ENCODE measurements at regions of chr11 and their contacts with region 1.

Region 1: GRCh38 chr11:4187055-4187988 is 92.7 kb downstream of the RRM1 start:
- DNase-seq: peak; percentile 80 to 84
- ATAC-seq: peak; percentile 87 to 94
- H3K4me3 ChIP-seq: peak overlapping the region; percentile 77
- H3K27ac ChIP-seq: peak overlapping the region; percentile 91 to 94
- H3K4me1 ChIP-seq: no peaks in the 10 kb centered on the region
- CTCF ChIP-seq: peak; percentile 94
- EP300 ChIP-seq: no peak
- POLR2A ChIP-seq: no peak
- RAD21 ChIP-seq: peak; percentile 92 to 99

Region 2: DNA sequence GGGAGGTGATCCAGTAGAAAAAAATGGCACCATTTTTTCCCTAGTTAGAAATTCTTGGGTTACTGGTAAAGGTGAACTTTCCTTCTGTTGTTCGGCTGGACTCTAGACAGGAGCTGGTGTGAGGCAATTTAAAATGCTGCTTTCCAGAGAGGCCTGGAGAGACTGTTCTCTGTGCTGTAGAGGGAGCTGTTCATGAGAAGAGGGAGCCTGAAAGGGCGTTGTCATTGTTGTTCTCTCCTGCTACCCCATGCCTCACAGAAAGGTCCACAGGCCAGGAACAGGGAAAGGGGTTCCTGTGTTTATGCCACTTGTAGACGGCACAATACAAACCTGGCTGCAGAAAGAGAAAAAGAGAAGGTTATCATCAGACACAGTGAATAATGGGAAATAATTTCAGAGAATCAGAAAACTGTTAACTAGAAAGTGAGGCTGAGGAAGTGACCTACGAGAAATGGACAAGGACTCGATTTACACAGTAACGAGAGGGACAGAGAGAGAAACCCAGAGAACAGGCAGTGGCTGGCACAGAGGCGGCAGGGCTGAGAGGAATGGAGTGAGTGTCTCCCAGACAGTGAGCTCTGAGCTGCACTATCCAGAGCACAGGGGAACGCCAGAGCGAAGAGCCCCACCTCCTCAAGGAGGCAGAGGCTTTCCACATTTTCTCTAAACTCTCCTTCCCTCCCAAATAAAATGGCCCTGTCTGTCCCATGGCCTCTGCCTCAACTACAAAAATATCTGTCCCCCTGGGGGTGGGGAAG is 16.5 kb after region 1 on chr11:
- CTCF ChIA-PET with region 1: interaction called, 31 read pairs
- POLR2A ChIA-PET with region 1: no interaction called
- DNase-seq: peak in 1 of 2 experiments; percentile 9
- ATAC-seq: peak in 1 of 2 experiments; percentile 74; a peak in 3 of 6 replicates
- H3K4me3 ChIP-seq: no peak overlapping the region
- H3K27ac ChIP-seq: no peak overlapping the region
- H3K4me1 ChIP-seq: no peaks in the 10 kb centered on the region
- CTCF ChIP-seq: no peak
- EP300 ChIP-seq: no peak
- POLR2A ChIP-seq: no peak
- RAD21 ChIP-seq: no peak

Region 3: GRCh38 chr11:4418403-4418802 is 231.1 kb after region 1 on chr11:
- CTCF ChIA-PET with region 1: interaction called, 11 read pairs
- POLR2A ChIA-PET with region 1: no interaction called
- DNase-seq: no peak
- ATAC-seq: no peak
- H3K4me3 ChIP-seq: no peak overlapping the region
- H3K27ac ChIP-seq: no peak overlapping the region
- H3K4me1 ChIP-seq: no peaks in the 10 kb centered on the region
- CTCF ChIP-seq: no peak
- EP300 ChIP-seq: no peak
- POLR2A ChIP-seq: no peak
- RAD21 ChIP-seq: no peak

Region 4: DNA sequence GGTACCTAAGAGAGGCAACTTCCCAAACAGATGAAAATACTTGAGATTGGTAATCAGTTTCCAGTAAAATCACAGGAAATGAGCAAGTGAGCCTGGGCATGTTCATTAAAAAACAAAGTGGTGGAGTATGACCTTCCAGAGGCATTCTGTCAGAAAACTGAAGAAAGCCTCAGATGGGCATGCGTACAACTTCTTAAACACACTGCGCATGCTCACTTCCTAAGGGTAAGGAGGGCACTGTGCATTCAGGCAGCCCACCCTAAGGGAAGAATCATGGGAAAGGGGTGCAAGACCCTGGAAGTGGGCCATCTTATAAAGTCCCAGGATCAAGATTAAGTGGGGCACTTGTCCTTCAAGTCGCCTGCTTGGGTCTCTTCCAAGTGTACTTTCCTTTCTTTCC is 265.8 kb after region 1 on chr11:
- CTCF ChIA-PET with region 1: no interaction called
- POLR2A ChIA-PET with region 1: no interaction called
- DNase-seq: no peak
- ATAC-seq: no peak
- H3K4me3 ChIP-seq: no peak overlapping the region
- H3K27ac ChIP-seq: no peak overlapping the region
- H3K4me1 ChIP-seq: no peaks in the 10 kb centered on the region
- CTCF ChIP-seq: no peak
- EP300 ChIP-seq: no peak
- POLR2A ChIP-seq: no peak
- RAD21 ChIP-seq: no peak

Region 5: GRCh38 chr11:4496557-4497275 is 309.4 kb after region 1 on chr11:
- CTCF ChIA-PET with region 1: interaction called, 96 read pairs
- POLR2A ChIA-PET with region 1: no interaction called
- DNase-seq: no peak
- ATAC-seq: no peak
- H3K4me3 ChIP-seq: no peak overlapping the region
- H3K27ac ChIP-seq: no peak overlapping the region
- H3K4me1 ChIP-seq: no peaks in the 10 kb centered on the region
- CTCF ChIP-seq: no peak
- EP300 ChIP-seq: no peak
- POLR2A ChIP-seq: no peak
- RAD21 ChIP-seq: no peak

Region 6: DNA sequence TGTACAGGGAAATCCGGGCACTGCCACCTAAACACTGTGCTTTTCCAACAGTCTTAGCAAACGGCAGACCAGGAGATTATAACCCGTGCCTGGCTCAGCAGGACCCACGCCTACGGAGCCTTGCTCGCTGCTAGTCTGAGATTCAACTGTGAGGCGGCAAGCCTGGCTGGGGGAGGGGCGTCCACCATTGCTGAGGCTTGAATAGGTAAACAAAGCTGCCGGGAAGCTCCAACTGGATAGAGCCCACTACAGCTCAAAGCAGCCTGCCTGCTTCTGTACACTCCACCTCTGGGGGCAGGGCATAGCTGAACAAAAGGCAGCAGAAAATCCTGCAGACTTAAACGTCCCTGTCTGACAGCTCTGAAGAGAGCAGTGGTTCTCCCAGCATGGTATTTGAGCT is 344.4 kb after region 1 on chr11:
- CTCF ChIA-PET with region 1: interaction called, 17 read pairs
- POLR2A ChIA-PET with region 1: no interaction called
- DNase-seq: no peak
- ATAC-seq: no peak
- H3K4me3 ChIP-seq: no peak overlapping the region
- H3K27ac ChIP-seq: no peak overlapping the region
- H3K4me1 ChIP-seq: no peaks in the 10 kb centered on the region
- CTCF ChIP-seq: no peak
- EP300 ChIP-seq: no peak
- POLR2A ChIP-seq: no peak
- RAD21 ChIP-seq: no peak

Region 7: GRCh38 chr11:4605057-4605456 is 417.7 kb after region 1 on chr11:
- CTCF ChIA-PET with region 1: interaction called, 11 read pairs
- POLR2A ChIA-PET with region 1: no interaction called
- DNase-seq: no peak
- ATAC-seq: no peak
- H3K4me3 ChIP-seq: no peak overlapping the region
- H3K27ac ChIP-seq: no peak overlapping the region
- H3K4me1 ChIP-seq: peaks cover 14% of the 10 kb centered on the region
- CTCF ChIP-seq: no peak
- EP300 ChIP-seq: no peak
- POLR2A ChIP-seq: no peak
- RAD21 ChIP-seq: no peak

Measured in A549 (cell line).